ENCODE measurements at regions of chr15 and their contacts with region 1.

Region 1: GRCh38 chr15:62125773-62126172 is 39.3 kb downstream of the C2CD4B start:
- DNase-seq: peak; percentile 91
- H3K4me3 ChIP-seq: no peak overlapping the region
- H3K27ac ChIP-seq: peak overlapping the region; percentile 99
- H3K4me1 ChIP-seq: peaks cover 35% of the 10 kb centered on the region
- H3K27me3 ChIP-seq: no peaks in the 10 kb centered on the region
- CTCF ChIP-seq: peak; percentile 56 to 66
- POLR2A ChIP-seq: no peak

Region 2: GRCh38 chr15:62060113-62060895 is 65.5 kb before region 1 on chr15 and contains the start of gene VPS13C:
- CTCF ChIA-PET with region 1: interaction called, 22 read pairs
- POLR2A ChIA-PET with region 1: no interaction called
- dilution Hi-C with region 1: no loop called
- intact Hi-C with region 1: no loop called
- DNase-seq: peak; percentile 98
- H3K4me3 ChIP-seq: peak within 1 kb of the TSS; percentile 90 to 99 (median 92)
- H3K27ac ChIP-seq: peak within 1 kb of the TSS; percentile 81
- H3K4me1 ChIP-seq: peaks cover 25% of the 10 kb centered on the region
- H3K27me3 ChIP-seq: no peaks in the 10 kb centered on the region
- CTCF ChIP-seq: peak; percentile 85 to 91
- POLR2A ChIP-seq: peak; percentile 80
- total RNA-seq, gene VPS13C: 57.5 and 60.3 TPM in 2 replicates

Region 3: DNA sequence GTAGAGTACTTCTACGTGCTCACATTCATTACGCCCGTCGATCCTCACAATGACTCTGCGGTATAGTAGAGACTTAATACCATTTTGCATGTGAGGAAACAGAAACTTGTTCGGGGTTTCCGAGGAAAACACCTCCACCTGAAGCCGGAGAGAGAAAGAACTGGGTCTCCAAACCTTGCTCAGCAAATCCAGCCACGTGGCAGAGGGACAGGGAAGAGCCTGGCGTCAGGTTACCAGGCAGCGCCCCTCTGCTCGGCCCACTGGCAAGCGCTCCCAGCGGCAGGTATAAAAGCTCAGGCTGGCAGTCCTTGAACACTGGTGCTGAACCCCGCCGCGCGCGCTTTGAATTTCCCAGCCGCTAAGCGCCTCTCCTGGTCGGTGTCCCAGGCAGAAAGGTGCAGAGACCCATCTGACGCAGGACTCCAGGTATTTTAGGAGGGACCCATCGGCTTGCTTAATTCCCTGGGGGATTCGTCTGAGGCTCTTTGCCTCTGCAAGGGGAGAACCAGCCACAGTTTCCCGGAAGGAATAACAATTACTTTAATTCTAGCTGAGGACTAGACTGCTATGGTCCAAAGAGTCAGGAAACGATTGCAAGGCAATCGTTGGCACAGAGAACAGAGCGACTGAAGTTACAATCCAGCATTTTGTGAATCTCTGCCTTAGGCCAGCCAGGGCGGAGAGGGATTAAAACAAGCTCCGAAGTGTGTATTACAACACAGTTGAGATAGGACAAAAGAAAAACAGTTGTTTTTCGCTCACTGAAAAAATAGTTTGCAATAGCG is 58.9 kb before region 1 on chr15 and contains the start of gene C2CD4A:
- CTCF ChIA-PET with region 1: interaction called, 23 read pairs
- POLR2A ChIA-PET with region 1: no interaction called
- dilution Hi-C with region 1: no loop called
- intact Hi-C with region 1: loop called (anchors 1 kb)
- DNase-seq: peak; percentile 81
- H3K4me3 ChIP-seq: peak within 1 kb of the TSS; percentile 37 to 44 (median 38)
- H3K27ac ChIP-seq: no peak within 1 kb of the TSS
- H3K4me1 ChIP-seq: peaks cover 31% of the 10 kb centered on the region
- H3K27me3 ChIP-seq: no peaks in the 10 kb centered on the region
- CTCF ChIP-seq: peak in 1 of 2 donors; percentile 43
- POLR2A ChIP-seq: no peak
- total RNA-seq, gene C2CD4A: 0.46 and 1.1 TPM in 2 replicates

Region 4: DNA sequence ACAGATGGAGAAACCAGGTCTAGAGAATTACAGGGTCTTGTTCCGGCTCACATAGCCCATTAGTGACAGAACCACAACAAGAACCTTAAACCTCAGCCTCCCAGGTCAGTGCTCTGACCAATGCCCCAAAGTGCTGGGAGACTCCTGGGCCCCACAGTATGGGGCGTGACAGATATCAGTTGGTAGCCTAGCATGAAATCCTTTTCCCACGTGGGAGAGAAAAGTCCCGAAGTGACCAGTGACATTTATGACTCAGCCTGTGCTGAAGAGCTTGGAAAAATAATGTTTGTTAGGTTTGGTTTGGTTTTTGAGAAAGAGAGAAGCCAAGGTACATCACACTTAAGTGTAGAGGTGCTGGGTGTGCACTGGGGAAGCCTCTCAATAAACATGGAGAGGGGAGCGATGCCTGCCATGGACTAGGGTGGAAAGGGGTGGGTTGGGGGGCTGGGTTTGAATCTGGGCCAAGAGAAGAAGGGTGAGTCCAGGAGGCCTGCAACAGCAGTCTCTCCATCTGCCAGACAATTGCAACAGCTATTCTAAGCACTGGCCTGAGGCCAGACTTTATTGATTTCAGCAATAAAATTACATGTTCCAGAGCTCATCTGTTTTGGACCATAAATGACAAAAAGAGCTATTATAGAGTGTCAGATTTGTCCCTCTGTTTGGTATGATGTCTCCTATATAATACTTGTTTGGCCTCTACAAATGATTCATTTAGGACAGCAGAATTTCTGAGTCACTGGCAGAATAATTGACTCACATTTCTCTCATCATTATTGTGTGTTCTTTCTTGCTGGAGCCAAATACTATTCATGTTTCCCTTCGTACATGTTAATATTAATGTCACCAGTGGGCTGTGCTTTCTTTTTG is 15.6 kb before region 1 on chr15:
- CTCF ChIA-PET with region 1: interaction called, 11 read pairs
- POLR2A ChIA-PET with region 1: interaction called, 3 read pairs
- dilution Hi-C with region 1: no loop called
- intact Hi-C with region 1: loop called (anchors 2 kb)
- DNase-seq: peak; percentile 95
- H3K4me3 ChIP-seq: no peak overlapping the region
- H3K27ac ChIP-seq: peak overlapping the region; percentile 55
- H3K4me1 ChIP-seq: peaks cover 39% of the 10 kb centered on the region
- H3K27me3 ChIP-seq: no peaks in the 10 kb centered on the region
- CTCF ChIP-seq: no peak
- POLR2A ChIP-seq: no peak

Region 5: DNA sequence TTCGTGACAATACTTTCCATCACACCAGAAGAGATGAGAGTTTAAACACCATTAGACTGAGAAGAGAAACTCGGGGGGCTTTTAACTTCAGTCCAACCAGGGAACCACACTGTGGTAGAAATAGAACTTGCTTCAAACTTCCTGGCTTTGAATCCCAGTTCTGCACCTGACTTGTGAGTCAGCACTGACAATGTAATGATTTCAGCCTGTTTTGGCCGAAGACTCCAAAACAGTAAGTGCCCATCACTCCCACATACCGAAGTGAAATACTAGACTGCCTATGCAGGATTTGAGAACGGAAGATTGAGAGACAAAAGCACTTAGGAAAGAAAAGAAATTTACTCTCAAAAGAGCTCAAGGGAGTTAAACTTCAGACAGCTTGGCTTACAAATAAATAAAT is 12.4 kb after region 1 on chr15:
- CTCF ChIA-PET with region 1: interaction called, 35 read pairs
- POLR2A ChIA-PET with region 1: interaction called, 4 read pairs
- dilution Hi-C with region 1: no loop called
- intact Hi-C with region 1: loop called (anchors 1 kb)
- DNase-seq: peak; percentile 94
- H3K4me3 ChIP-seq: no peak overlapping the region
- H3K27ac ChIP-seq: peak overlapping the region; percentile 72
- H3K4me1 ChIP-seq: peaks cover 39% of the 10 kb centered on the region
- H3K27me3 ChIP-seq: no peaks in the 10 kb centered on the region
- CTCF ChIP-seq: no peak
- POLR2A ChIP-seq: no peak

Region 6: DNA sequence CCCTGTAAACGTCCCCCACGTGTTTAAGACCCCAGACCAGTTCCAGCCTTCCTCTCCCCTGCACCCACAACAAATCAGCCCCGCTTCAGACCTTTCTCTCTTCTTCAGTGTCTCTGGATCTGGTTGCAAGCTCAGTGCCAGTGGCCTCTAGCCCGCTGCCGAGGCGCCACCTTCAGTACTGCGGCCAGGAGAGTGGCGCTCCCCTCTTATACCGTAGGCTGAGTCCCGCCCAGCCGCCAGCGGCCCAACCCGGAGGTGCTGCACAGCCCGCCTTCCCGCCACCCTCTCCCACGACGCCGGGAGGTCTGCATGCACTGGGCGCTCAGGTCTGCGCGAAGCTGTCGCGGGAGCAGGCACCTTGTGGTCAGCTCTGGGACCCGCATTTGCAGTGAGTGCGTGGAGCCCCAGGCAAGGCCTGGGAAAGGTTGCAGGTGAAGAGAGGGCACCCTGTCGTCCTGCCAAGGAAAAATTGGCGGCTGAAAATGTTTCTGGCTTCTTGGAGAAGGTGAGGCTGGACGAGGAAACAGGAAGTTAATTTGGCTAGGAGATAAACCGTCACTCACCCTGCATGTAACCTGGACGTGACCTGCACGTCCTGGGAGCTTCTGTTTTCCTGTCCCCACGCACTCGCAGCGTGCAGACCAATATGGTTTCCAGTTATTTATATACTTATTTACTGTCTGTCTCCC is 39.5 kb after region 1 on chr15 and contains the start of gene C2CD4B:
- CTCF ChIA-PET with region 1: interaction called, 48 read pairs
- POLR2A ChIA-PET with region 1: interaction called, 26 read pairs
- dilution Hi-C with region 1: no loop called
- intact Hi-C with region 1: loop called (anchors 1 kb)
- DNase-seq: peak; percentile 89
- H3K4me3 ChIP-seq: peak within 1 kb of the TSS; percentile 49 to 75 (median 66)
- H3K27ac ChIP-seq: peak within 1 kb of the TSS; percentile 78
- H3K4me1 ChIP-seq: peaks cover 31% of the 10 kb centered on the region
- H3K27me3 ChIP-seq: no peaks in the 10 kb centered on the region
- CTCF ChIP-seq: peak in 1 of 2 donors; percentile 19
- POLR2A ChIP-seq: peak; percentile 90
- total RNA-seq, gene C2CD4B: 28.4 and 31.7 TPM in 2 replicates

Region 7: DNA sequence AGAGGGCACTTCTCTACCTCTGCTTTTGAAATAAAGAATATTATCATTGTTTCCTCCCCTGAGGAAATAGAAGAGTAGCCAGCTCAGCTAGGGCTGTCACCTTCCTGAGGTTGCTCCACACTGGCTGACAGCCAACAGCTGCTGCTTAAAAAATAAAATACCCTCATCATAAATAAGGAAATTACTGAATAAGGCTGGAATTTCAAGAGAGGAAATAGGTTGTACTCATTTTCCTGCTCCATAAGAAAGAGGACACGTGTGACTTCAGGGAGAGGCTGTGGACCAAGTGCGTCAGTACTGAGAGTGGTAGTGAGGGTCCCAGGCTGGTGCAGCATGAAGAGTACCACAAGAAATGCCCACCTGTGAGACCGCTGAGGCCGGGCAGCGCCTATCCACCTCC is 47.4 kb after region 1 on chr15:
- CTCF ChIA-PET with region 1: interaction called, 19 read pairs
- POLR2A ChIA-PET with region 1: no interaction called
- dilution Hi-C with region 1: no loop called
- intact Hi-C with region 1: loop called (anchors 1 kb)
- DNase-seq: peak; percentile 97
- H3K4me3 ChIP-seq: peak overlapping the region in 2 of 3 experiments; percentile 10 to 68
- H3K27ac ChIP-seq: peak overlapping the region; percentile 100
- H3K4me1 ChIP-seq: peaks cover 42% of the 10 kb centered on the region
- H3K27me3 ChIP-seq: no peaks in the 10 kb centered on the region
- CTCF ChIP-seq: no peak
- POLR2A ChIP-seq: peak; percentile 51

Region 8: DNA sequence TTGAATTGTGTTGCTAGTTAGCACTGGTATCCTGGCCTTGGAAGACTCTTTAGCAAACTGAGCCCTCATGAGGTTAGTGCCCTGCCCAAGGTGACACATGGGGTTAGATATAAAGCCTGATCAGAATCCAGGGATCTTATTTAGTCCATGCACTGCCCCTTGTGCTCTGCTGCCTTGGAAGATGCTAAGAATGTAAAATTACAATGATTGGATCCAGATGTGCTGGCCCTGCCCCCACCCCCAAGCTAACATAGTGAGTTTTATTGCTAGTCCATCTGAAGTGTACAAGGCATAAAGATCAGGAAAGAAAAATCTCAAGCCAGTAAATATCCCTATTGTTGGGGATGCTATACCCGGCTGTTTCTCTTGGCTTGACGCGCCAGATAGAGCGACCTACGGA is 287.4 kb after region 1 on chr15:
- CTCF ChIA-PET with region 1: no interaction called
- POLR2A ChIA-PET with region 1: no interaction called
- dilution Hi-C with region 1: no loop called
- intact Hi-C with region 1: no loop called
- DNase-seq: no peak
- H3K4me3 ChIP-seq: no peak overlapping the region
- H3K27ac ChIP-seq: no peak overlapping the region
- H3K4me1 ChIP-seq: no peaks in the 10 kb centered on the region
- H3K27me3 ChIP-seq: no peaks in the 10 kb centered on the region
- CTCF ChIP-seq: no peak
- POLR2A ChIP-seq: no peak